ENCODE measurements at regions of chr14 and their contacts with region 1.

Region 1: DNA sequence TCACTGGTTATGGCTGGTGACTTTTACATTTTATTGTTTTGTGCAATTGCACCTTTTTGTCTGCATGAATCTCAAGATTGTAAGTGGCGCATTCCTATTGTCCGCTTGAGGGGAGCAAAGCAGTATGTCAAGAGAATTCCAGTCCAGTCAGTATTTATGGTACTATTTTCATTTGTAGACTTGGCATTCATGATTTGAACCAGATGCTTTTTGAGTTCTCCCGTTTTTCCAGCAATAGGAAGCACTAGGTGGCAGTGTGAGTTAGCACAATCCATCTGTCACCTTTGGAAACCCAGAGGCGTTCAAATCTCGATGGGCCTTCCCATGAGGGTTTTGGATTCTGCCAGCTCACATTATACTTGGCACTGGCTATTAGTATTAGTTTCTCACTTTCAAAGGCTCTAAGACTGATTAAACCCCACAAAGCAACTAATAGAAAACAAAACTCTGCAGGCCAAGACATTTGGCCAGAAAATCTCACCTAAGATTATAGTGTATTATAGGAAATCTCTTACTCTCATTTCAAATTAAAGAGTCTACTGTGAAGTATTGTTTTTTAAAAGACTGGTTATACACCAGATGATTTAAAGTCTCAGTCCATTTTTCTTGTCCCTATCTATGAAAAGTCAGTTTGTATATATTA is 2.2 kb downstream of the DACT1 start:
- DNase-seq: peak; percentile 47 to 71 (median 60)
- H3K4me3 ChIP-seq: peak overlapping the region in 1 of 4 donors; percentile 87
- H3K27ac ChIP-seq: no peak overlapping the region
- H3K4me1 ChIP-seq: peaks cover 9 to 18% of the 10 kb centered on the region in 2 donors
- H3K27me3 ChIP-seq: no peaks in the 10 kb centered on the region
- CTCF ChIP-seq: peak; percentile 24 to 68 (median 61)
- POLR2A ChIP-seq: no peak

Region 2: GRCh38 chr14:58898655-58899316 is 258.8 kb after region 1 on chr14:
- intact Hi-C with region 1: no loop called
- DNase-seq: peak in 3 of 7 donors; percentile 19 to 32 (median 31)
- H3K4me3 ChIP-seq: no peak overlapping the region
- H3K27ac ChIP-seq: peak overlapping the region in 1 of 5 donors; percentile 70
- H3K4me1 ChIP-seq: no peaks in the 10 kb centered on the region
- H3K27me3 ChIP-seq: no peaks in the 10 kb centered on the region
- CTCF ChIP-seq: no peak
- POLR2A ChIP-seq: no peak

Region 3: DNA sequence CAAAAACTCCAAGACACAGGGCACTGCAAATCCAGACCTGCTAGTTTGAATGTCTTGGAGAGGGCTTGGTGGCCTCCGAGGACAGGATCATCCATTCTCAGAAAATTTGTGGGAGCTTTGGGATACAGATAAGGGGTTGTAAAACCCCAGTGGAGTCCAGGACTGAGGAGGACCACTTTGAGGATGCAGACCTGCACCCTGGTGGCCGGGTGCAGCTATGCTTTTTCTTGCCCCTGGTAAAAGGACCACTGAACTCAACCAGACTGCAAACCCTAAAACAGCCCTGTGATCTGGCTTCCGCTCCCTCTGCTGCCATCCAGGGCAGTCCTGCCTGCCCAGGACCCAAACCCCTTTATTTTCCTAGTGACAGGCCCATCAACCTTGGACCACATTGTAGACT is 379.0 kb after region 1 on chr14:
- intact Hi-C with region 1: loop called in 1 of 2 experiments (anchors 10 kb)
- DNase-seq: no peak
- H3K4me3 ChIP-seq: no peak overlapping the region
- H3K27ac ChIP-seq: no peak overlapping the region
- H3K4me1 ChIP-seq: no peaks in the 10 kb centered on the region
- H3K27me3 ChIP-seq: no peaks in the 10 kb centered on the region
- CTCF ChIP-seq: no peak
- POLR2A ChIP-seq: no peak

Region 4: GRCh38 chr14:59055439-59056045 is 415.6 kb after region 1 on chr14:
- intact Hi-C with region 1: loop called in 1 of 2 experiments (anchors 10 kb)
- DNase-seq: peak in 6 of 7 donors; percentile 22 to 62 (median 37)
- H3K4me3 ChIP-seq: no peak overlapping the region
- H3K27ac ChIP-seq: no peak overlapping the region
- H3K4me1 ChIP-seq: no peaks in the 10 kb centered on the region
- H3K27me3 ChIP-seq: no peaks in the 10 kb centered on the region
- CTCF ChIP-seq: peak; percentile 64 to 82 (median 72)
- POLR2A ChIP-seq: no peak

Measured in adrenal gland (tissue), 19 donors.